Activated CD4-positive, alpha-beta memory T cell treated with anti-CD3 and anti-CD28 coated beads for 36 hours (primary cell): ENCODE measurements at regions of chr19 and their contacts with region 1.

Region 1: DNA sequence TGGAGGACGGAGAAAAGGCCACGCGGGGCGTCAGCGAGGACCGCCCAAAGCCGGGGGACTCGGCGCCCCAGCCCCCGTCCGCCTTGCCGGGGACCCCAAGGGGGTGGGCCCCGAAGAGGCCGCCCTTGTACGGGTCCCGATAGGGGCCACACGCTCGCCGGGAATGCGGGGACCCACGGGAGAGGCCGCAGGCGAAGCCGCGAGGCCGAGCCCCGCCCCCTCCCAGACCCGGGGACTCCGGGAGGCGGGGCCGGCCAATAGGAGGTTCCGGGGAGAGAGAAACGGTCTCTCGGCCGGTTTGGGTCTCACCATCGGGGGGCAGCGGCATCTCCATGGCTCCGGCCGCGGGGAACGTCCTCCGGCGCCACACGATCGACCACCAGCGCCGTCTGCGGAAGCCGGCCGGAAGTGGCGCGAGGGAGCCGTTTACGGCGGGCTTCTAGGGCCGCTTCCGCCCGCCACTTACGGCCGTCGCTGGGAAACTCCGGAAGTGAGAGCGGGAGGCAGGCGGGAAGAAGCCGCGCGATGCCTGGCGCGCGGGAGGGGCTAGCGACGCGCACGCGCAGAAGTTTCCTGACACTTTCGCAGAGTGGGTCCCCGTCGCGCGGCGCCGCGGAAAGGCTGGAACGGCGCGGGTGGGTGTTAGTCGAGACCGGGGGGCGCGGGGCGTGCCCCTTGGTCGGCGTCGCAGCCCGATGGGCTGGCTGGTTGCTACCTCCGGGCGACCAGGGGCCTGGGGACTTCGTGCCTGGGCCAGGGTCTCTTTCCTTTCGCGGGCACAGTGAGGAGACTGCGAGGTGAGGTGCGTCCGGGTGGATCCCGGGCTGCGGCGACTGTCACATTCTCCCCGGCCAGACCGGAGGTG is at the start of gene CHERP:
- DNase-seq: peak; percentile 96
- H3K4me3 Mint-ChIP-seq: peak within 1 kb of the TSS; percentile 84
- H3K27ac Mint-ChIP-seq: peak within 1 kb of the TSS; percentile 81
- H3K4me1 Mint-ChIP-seq: peaks cover 53% of the 10 kb centered on the region
- H3K27me3 Mint-ChIP-seq: no peaks in the 10 kb centered on the region
- total RNA-seq, gene CHERP: 50.8 TPM

Region 2: GRCh38 chr19:16197622-16198369 is 344.5 kb before region 1 on chr19 and contains the start of gene AP1M1:
- CTCF ChIA-PET with region 1: no interaction called
- POLR2A ChIA-PET with region 1: no interaction called
- intact Hi-C with region 1: no loop called
- DNase-seq: peak; percentile 99
- H3K4me3 Mint-ChIP-seq: peak within 1 kb of the TSS; percentile 97
- H3K27ac Mint-ChIP-seq: peak within 1 kb of the TSS; percentile 92
- H3K4me1 Mint-ChIP-seq: peaks cover 41% of the 10 kb centered on the region
- H3K27me3 Mint-ChIP-seq: no peaks in the 10 kb centered on the region
- total RNA-seq, gene AP1M1: 100 to 113 TPM

Region 3: DNA sequence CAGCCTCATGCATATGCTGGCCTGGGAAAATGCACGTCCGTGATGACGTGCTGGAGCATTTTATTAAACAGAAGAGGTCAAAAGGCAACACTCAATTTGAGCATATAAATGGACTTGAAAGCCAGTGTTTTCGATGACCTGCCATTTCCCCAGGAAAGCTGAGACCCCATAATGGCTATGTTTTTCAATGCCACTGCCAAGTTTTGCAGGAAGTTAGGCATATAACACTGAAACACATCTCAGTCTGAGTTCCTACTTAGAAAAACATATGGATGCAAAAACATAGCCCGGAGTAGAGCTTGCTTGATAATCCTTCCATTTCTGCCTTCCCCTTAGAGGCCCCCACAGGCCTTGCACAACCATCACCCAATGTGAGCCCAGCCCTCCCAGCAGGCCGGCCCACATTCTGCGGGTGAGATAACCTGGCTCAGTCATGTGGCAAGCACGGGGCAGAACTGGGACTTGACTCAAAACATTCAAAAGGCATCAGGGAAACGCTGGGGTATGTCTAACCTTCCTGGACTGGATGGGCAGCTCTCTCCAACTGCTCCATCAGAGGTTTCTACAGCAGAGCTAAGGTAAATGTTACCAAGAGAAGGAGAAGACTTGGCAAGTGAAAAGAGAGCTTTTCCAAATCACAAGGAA is 95.4 kb before region 1 on chr19:
- CTCF ChIA-PET with region 1: no interaction called
- POLR2A ChIA-PET with region 1: no interaction called
- intact Hi-C with region 1: loop called (anchors 5 kb)
- DNase-seq: peak; percentile 66
- H3K4me3 Mint-ChIP-seq: no peak overlapping the region
- H3K27ac Mint-ChIP-seq: peak overlapping the region; percentile 81
- H3K4me1 Mint-ChIP-seq: peaks cover 55% of the 10 kb centered on the region
- H3K27me3 Mint-ChIP-seq: no peaks in the 10 kb centered on the region

Region 4: GRCh38 chr19:16572332-16573211 is 30.3 kb after region 1 on chr19 and contains the start of gene SLC35E1:
- CTCF ChIA-PET with region 1: no interaction called
- POLR2A ChIA-PET with region 1: interaction called, 3 read pairs
- intact Hi-C with region 1: loop called (anchors 2 kb)
- DNase-seq: peak; percentile 95
- H3K4me3 Mint-ChIP-seq: peak within 1 kb of the TSS; percentile 92
- H3K27ac Mint-ChIP-seq: peak within 1 kb of the TSS; percentile 93
- H3K4me1 Mint-ChIP-seq: peaks cover 53% of the 10 kb centered on the region
- H3K27me3 Mint-ChIP-seq: no peaks in the 10 kb centered on the region
- total RNA-seq, gene SLC35E1: 42.0 to 46.0 TPM

Region 5: GRCh38 chr19:16645140-16645539 is 102.9 kb after region 1 on chr19:
- CTCF ChIA-PET with region 1: no interaction called
- POLR2A ChIA-PET with region 1: no interaction called
- intact Hi-C with region 1: no loop called
- DNase-seq: no peak
- H3K4me3 Mint-ChIP-seq: no peak overlapping the region
- H3K27ac Mint-ChIP-seq: no peak overlapping the region
- H3K4me1 Mint-ChIP-seq: peaks cover 6% of the 10 kb centered on the region
- H3K27me3 Mint-ChIP-seq: no peaks in the 10 kb centered on the region